ENCODE measurements at regions of chr5 and their contacts with region 1.

Region 1: DNA sequence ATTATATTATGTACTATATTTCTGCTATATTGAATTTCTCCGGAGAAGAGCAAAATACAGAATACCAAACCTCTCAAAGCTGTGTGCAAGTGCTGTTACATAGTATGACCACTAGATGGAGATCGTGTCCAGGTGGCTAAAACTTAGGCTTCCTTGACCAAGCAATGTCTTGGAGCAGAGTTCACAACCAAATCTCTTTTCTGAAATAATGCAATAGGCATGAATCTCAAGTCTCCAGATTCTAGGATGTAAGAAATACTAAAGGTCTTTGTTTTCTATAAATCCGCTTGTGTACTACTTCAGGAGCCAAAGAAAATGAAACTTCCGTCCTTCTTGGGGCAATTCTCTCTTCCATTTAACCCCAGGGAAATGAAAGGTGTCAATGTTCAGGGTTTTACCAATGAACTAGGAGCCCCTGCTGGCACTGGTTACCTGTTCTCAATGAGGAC is 181.5 kb upstream of the RAI14 start:
- DNase-seq: peak in 1 of 2 donors; percentile 62
- ATAC-seq: peak; percentile 72 to 83 (median 75)
- H3K4me3 ChIP-seq: no peak overlapping the region
- H3K4me3 Mint-ChIP-seq: no peak overlapping the region
- H3K27ac ChIP-seq: no peak overlapping the region
- H3K27ac Mint-ChIP-seq: no peak overlapping the region
- H3K4me1 ChIP-seq: peaks cover 6% of the 10 kb centered on the region
- H3K4me1 Mint-ChIP-seq: peaks cover 16% of the 10 kb centered on the region in 2 donors
- H3K27me3 ChIP-seq: no peaks in the 10 kb centered on the region
- H3K27me3 Mint-ChIP-seq: peaks cover 5 to 11% of the 10 kb centered on the region in 2 donors
- CTCF ChIP-seq: peak; percentile 97

Region 2: DNA sequence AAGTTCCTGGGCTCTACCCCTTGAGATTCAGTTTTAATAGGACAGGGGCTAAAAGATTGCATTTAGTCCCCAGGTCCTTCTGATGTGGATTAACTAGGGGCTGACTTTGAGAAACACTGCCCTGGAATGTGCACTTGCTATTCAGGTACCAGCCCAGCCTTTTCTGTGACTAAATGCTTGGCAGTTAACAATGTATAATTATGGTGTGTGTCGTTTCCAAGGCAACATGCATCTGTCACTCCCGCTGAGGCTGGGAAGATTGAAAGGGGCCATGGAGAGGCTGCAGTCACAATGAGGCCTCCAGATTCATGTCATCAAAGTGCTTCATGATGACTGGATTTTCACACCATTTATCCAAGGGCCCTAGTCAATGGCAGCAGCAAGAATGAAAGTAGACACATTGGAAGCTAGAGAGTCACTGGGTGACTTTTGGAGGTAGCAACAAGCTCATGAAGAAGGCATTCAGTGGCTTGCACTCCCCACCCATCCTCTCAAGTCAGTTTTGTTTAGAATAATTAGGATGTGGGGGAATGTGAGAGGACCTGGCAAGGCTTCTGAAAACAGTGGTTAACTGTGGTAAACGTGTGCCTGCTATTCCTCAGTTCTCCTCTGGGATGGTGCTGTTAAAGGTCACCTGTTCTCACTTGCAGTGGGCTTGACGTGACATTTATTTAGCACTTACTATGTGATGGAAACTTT is 209.8 kb after region 1 on chr5:
- intact Hi-C with region 1: no loop called
- DNase-seq: no peak
- ATAC-seq: no peak
- H3K4me3 ChIP-seq: no peak overlapping the region
- H3K4me3 Mint-ChIP-seq: no peak overlapping the region
- H3K27ac ChIP-seq: no peak overlapping the region
- H3K27ac Mint-ChIP-seq: no peak overlapping the region
- H3K4me1 ChIP-seq: no peaks in the 10 kb centered on the region
- H3K4me1 Mint-ChIP-seq: no peaks in the 10 kb centered on the region
- H3K27me3 ChIP-seq: no peaks in the 10 kb centered on the region
- H3K27me3 Mint-ChIP-seq: peaks cover 4 to 7% of the 10 kb centered on the region in 2 donors
- CTCF ChIP-seq: no peak

Region 3: DNA sequence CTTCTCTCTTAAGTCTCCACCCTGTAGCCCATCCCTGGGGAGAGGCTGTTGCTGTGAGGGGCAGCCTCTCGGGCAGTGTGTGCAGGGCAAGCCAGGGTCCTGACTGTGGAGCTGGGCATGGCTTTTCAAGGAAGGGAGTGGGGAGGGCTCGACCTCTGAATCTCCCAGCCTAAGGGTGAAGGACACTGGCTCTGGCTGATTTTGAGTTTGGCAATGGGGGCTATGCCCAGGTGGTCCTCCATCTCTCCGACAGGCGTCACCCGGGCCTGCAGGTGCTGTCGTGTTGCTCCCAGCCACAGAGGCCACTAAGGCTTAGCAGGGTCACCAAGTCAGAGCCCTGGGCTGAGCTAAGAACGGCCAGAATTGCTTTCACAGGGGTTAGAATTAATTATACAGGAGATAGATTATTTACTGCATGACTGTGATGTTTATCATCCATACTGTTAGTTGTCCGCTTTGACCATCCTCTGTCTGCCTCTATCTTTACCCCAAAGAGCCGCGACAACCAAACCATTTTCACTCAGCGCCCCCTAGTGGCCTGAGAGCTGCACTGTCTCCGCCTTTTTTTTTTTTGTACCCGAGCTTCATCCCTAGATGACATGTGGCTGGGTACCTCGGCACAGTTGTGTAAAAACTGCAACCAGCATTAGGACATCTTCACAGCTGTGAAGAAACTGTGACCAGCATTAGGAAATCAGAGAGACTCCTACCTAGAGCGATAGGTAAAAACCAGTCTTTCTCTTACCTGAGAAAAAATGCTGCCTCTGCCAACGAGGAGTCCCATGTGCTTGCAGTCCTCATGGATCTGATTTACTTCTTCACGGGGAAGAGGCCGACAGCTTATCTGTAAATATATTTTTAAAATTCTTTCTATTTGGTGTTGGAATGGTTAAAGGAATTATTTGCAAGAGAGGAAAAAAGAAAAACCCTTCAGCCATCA is 528.7 kb after region 1 on chr5:
- intact Hi-C with region 1: loop called (anchors 1 kb)
- DNase-seq: peak; percentile 30 to 67
- ATAC-seq: peak; percentile 38 to 64 (median 54)
- H3K4me3 ChIP-seq: no peak overlapping the region
- H3K4me3 Mint-ChIP-seq: no peak overlapping the region
- H3K27ac ChIP-seq: no peak overlapping the region
- H3K27ac Mint-ChIP-seq: no peak overlapping the region
- H3K4me1 ChIP-seq: no peaks in the 10 kb centered on the region
- H3K4me1 Mint-ChIP-seq: no peaks in the 10 kb centered on the region
- H3K27me3 ChIP-seq: no peaks in the 10 kb centered on the region
- H3K27me3 Mint-ChIP-seq: peaks cover 2 to 19% of the 10 kb centered on the region in 2 donors
- CTCF ChIP-seq: peak; percentile 81